ENCODE measurements at regions of chr1 and their contacts with region 1.

Region 1: DNA sequence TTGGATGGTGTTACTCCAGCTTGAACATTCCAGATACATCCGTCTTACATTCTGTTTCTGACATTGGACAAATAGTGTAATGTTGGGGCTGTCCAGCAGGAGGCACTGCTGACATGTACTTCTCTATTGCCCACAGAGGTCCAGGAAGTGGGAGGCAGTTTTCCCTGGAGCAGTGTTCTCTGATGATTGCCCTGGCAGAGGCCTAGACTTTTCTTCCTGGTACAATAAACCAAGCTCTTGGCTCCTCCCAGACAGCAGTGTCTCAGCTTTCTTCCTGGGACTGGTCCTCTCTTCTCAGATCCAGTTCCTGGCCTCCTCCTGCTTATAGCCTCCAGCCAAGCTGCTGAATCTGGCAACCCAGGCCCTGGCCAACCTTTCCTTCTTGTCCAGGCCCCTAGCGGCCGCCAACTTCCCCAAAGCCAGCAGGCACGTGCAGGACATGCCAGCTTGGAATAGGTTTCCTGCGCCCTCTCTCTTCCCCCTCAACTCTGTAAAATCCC is 14.9 kb upstream of the IFNLR1 start:
- DNase-seq: peak; percentile 92
- H3K4me3 ChIP-seq: no peak overlapping the region
- H3K27ac ChIP-seq: peak overlapping the region; percentile 27
- H3K4me1 ChIP-seq: peaks cover 17% of the 10 kb centered on the region
- H3K27me3 ChIP-seq: no peaks in the 10 kb centered on the region
- CTCF ChIP-seq: peak; percentile 79 to 80

Region 2: GRCh38 chr1:24186993-24187805 is 14.8 kb before region 1 on chr1 and contains the start of gene IFNLR1:
- CTCF ChIA-PET with region 1: no interaction called
- dilution Hi-C with region 1: no loop called
- in situ Hi-C with region 1: no loop called
- intact Hi-C with region 1: no loop called
- DNase-seq: peak; percentile 55
- H3K4me3 ChIP-seq: peak within 1 kb of the TSS; percentile 53 to 62 (median 58)
- H3K27ac ChIP-seq: peak within 1 kb of the TSS; percentile 49
- H3K4me1 ChIP-seq: peaks cover 40% of the 10 kb centered on the region
- H3K27me3 ChIP-seq: no peaks in the 10 kb centered on the region
- CTCF ChIP-seq: no peak
- total RNA-seq, gene IFNLR1: 7.8 to 12.5 TPM

Region 3: GRCh38 chr1:24235921-24236781 is 34.2 kb after region 1 on chr1:
- CTCF ChIA-PET with region 1: no interaction called
- dilution Hi-C with region 1: no loop called
- in situ Hi-C with region 1: no loop called
- intact Hi-C with region 1: loop called (anchors 2 kb)
- DNase-seq: peak; percentile 73
- H3K4me3 ChIP-seq: no peak overlapping the region
- H3K27ac ChIP-seq: peak overlapping the region; percentile 49
- H3K4me1 ChIP-seq: peaks cover 16% of the 10 kb centered on the region
- H3K27me3 ChIP-seq: no peaks in the 10 kb centered on the region
- CTCF ChIP-seq: no peak

Region 4: GRCh38 chr1:24321697-24322469 is 119.9 kb after region 1 on chr1:
- CTCF ChIA-PET with region 1: interaction called, 4 read pairs
- dilution Hi-C with region 1: no loop called
- in situ Hi-C with region 1: loop called in 1 of 2 experiments (anchors 5 kb)
- intact Hi-C with region 1: loop called (anchors 1 kb)
- DNase-seq: peak; percentile 98
- H3K4me3 ChIP-seq: peak overlapping the region; percentile 17 to 57 (median 40)
- H3K27ac ChIP-seq: peak overlapping the region; percentile 92
- H3K4me1 ChIP-seq: peaks cover 65% of the 10 kb centered on the region
- H3K27me3 ChIP-seq: no peaks in the 10 kb centered on the region
- CTCF ChIP-seq: peak in 1 of 2 donors; percentile 12

Region 5: GRCh38 chr1:24526940-24527542 is 325.1 kb after region 1 on chr1:
- CTCF ChIA-PET with region 1: no interaction called
- dilution Hi-C with region 1: no loop called
- in situ Hi-C with region 1: no loop called
- intact Hi-C with region 1: loop called (anchors 5 kb)
- DNase-seq: no peak
- H3K4me3 ChIP-seq: no peak overlapping the region
- H3K27ac ChIP-seq: no peak overlapping the region
- H3K4me1 ChIP-seq: no peaks in the 10 kb centered on the region
- H3K27me3 ChIP-seq: no peaks in the 10 kb centered on the region
- CTCF ChIP-seq: peak; percentile 58 to 71

Region 6: GRCh38 chr1:24642481-24643361 is 440.7 kb after region 1 on chr1 and contains the start of gene SRRM1:
- CTCF ChIA-PET with region 1: no interaction called
- dilution Hi-C with region 1: loop called (anchors 5 kb)
- in situ Hi-C with region 1: loop called in 1 of 2 experiments (anchors 25 kb)
- intact Hi-C with region 1: loop called (anchors 2 kb)
- DNase-seq: peak; percentile 100
- H3K4me3 ChIP-seq: peak within 1 kb of the TSS; percentile 74 to 99 (median 95)
- H3K27ac ChIP-seq: peak within 1 kb of the TSS; percentile 98
- H3K4me1 ChIP-seq: peaks cover 17% of the 10 kb centered on the region
- H3K27me3 ChIP-seq: no peaks in the 10 kb centered on the region
- CTCF ChIP-seq: peak in 1 of 2 donors; percentile 33
- total RNA-seq, gene SRRM1: 56.0 to 146 TPM

Measured in mammary epithelial cell (primary cell).